Endothelial cell of umbilical vein (primary cell): ENCODE measurements at regions of chr21 and their contacts with region 1.

Region 1: GRCh38 chr21:36437745-36438128 is 42.2 kb downstream of the CLDN14 start:
- DNase-seq: peak; percentile 74
- H3K4me3 ChIP-seq: no peak overlapping the region
- H3K27ac ChIP-seq: peak overlapping the region; percentile 47
- H3K4me1 ChIP-seq: peaks cover 28% of the 10 kb centered on the region
- H3K27me3 ChIP-seq: no peaks in the 10 kb centered on the region
- CTCF ChIP-seq: no peak
- POLR2A ChIP-seq: peak; percentile 55

Region 2: GRCh38 chr21:36450511-36450910 is 12.8 kb after region 1 on chr21:
- CTCF ChIA-PET with region 1: no interaction called
- POLR2A ChIA-PET with region 1: interaction called, 7 read pairs
- dilution Hi-C with region 1: no loop called
- intact Hi-C with region 1: loop called (anchors 1 kb)
- DNase-seq: peak; percentile 57
- H3K4me3 ChIP-seq: no peak overlapping the region
- H3K27ac ChIP-seq: peak overlapping the region; percentile 61
- H3K4me1 ChIP-seq: peaks cover 32% of the 10 kb centered on the region
- H3K27me3 ChIP-seq: no peaks in the 10 kb centered on the region
- CTCF ChIP-seq: no peak
- POLR2A ChIP-seq: no peak

Region 3: DNA sequence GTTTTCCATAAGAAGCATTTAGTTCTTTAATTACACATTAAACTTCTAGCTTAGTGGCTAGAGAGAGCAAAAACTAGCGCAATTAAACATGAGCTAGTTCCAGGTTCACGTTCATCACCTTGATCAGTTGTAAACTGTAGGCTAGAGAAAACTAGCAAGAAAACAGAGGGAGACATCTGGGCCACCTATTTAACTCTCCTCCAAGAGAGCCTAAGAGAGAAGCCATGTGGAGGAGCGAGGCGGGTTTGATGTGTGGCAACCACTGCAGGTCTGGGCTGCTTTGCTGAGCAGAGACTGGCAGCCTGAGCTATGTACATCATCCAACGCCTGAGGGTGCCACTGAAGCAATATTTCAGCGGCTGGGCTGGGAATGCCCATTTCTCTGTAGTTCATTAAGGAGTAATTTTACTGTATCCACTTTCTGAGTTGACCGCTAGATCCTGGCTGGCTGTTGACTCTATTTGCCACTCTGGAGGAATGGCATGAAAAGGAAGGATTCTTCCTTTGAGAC is 1181.8 kb after region 1 on chr21:
- CTCF ChIA-PET with region 1: no interaction called
- POLR2A ChIA-PET with region 1: no interaction called
- dilution Hi-C with region 1: no loop called
- intact Hi-C with region 1: no loop called
- DNase-seq: no peak
- H3K4me3 ChIP-seq: no peak overlapping the region
- H3K27ac ChIP-seq: no peak overlapping the region
- H3K4me1 ChIP-seq: peaks cover 11% of the 10 kb centered on the region
- H3K27me3 ChIP-seq: no peaks in the 10 kb centered on the region
- CTCF ChIP-seq: no peak
- POLR2A ChIP-seq: no peak